ENCODE measurements at regions of chr9 and their contacts with region 1.

Region 1: DNA sequence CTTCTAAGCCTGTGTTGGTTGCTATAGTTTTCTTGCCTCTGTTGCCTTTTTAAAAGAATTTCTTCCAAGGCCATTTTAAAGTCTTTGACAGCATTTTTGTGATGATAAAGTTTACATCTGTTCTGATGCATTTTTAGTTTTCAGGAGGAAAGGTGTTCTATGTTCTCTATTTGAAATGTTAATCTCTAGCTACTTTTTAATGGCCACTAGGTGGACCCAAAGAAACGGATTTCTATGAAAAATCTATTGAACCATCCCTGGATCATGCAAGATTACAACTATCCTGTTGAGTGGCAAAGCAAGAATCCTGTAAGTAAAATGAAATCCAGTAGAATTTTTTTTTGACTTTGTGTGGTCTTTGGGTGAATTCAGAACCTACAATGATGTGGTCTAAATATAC is 60.2 kb downstream of the MELK start:
- DNase-seq: peak in 1 of 3 donors; percentile 8
- ATAC-seq: no peak
- H3K4me3 ChIP-seq: no peak overlapping the region
- H3K4me1 ChIP-seq: no peaks in the 10 kb centered on the region
- CTCF ChIP-seq: no peak

Region 2: DNA sequence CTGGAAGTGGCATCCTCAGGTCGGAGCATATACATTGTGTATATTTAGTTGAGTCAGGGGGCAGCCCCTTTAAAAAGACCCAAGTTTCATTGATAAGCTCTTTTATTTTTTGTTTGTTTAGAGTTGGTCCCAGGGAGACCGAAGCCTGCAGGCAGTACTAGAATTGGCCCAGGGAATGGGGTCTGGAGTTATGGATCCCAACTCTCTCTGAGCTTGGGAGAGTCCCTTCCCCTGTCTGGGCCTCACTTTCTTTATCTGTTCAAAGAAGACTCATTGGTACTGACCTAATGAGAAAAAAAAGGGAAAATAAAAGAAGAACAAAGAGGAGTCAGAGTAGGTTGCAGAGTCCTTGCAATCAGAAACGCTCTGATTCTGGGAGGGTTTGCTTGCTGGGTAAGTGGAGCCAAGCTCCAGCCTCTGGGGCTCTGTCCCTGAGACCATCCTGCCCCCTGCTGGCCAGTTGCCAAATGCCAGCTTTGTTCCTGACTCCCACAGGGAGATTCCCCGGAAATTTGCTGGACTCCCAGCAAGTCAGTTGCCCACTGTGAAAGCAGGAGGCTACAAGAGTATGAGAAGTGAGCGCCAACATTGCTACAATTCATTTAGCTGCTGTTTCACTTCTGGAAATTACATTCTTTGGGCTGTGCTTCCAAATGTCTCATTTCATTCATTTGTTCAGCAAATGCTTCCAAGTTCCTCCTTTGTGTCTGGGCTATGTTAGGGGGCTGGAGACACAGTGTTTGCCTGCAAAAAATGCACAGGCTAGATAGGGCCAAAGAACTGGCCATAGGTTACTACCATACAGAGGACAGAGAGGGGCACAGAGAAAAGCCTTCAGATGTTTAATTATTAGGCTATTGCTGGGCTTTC is 96.0 kb after region 1 on chr9:
- intact Hi-C with region 1: loop called in 1 of 2 experiments (anchors 2 kb)
- DNase-seq: peak; percentile 70 to 92 (median 86)
- ATAC-seq: peak; percentile 92
- H3K4me3 ChIP-seq: no peak overlapping the region
- H3K4me1 ChIP-seq: no peaks in the 10 kb centered on the region
- CTCF ChIP-seq: peak; percentile 78

Measured in mucosa of descending colon (tissue), 3 donors.